Cardiac septum (tissue), 1 donor: ENCODE measurements at regions of chr2 and their contacts with region 1.

Region 1: DNA sequence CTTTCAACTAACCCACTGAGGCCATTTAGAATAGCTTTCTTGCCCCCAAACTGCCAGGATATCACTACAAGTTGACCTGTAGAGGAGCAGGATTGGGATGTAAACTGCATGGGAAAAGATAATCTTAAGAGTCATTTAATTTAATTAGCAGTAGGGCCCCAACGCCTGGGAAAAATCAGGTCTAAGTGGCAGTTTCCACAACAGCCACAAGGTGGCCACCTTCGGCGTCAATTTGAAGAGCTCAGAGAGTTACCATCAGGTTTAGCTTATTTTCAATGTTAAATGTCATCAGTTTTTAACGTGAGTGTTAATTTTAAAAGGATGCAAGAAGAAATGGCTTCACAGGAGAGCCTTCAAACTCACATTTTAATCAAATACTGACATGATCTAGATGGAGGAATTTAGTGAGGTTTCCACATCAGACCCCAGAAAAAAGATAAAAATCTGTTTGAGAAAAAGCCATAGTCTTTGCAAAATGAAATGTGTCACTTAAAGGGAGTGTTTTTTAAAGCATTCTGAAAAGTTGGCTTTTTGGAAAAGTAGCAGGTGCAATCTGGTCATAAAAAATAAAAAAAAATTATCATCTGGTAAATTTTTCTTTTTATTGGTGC is 77.3 kb upstream of the UPP2 start:
- DNase-seq: peak; percentile 80

Region 2: DNA sequence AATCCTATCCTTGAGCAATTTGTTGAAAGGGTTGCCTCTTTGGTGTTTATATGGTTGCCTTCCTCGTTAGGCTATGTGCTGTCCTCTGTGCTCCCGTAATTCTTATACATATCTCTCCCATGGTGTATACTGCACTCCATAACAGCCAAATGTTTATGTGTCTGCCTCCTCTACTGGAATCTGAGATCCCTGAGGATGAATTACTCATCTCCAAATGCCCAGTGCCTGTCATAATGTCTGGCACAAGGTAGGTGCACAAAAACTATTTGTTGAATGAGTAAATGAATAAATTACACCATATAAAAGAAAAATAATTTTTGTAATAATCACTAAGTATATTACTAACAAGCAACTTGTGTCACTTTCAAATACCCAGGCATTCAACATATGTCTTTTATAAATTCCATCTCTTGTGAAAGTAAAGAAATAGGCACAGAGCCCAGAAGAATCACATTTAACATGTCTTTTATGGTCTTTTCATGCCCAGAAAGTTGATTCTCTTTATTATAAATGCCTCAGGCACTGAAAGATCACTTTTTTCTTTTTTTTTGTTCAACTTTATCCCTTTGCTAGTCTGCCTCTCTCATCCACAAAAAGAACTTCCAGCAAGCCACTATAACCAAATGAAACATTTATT is 267.3 kb after region 1 on chr2:
- intact Hi-C with region 1: no loop called
- DNase-seq: no peak

Region 3: GRCh38 chr2:158667586-158667985 is 643.2 kb after region 1 on chr2:
- intact Hi-C with region 1: no loop called
- DNase-seq: no peak

Region 4: DNA sequence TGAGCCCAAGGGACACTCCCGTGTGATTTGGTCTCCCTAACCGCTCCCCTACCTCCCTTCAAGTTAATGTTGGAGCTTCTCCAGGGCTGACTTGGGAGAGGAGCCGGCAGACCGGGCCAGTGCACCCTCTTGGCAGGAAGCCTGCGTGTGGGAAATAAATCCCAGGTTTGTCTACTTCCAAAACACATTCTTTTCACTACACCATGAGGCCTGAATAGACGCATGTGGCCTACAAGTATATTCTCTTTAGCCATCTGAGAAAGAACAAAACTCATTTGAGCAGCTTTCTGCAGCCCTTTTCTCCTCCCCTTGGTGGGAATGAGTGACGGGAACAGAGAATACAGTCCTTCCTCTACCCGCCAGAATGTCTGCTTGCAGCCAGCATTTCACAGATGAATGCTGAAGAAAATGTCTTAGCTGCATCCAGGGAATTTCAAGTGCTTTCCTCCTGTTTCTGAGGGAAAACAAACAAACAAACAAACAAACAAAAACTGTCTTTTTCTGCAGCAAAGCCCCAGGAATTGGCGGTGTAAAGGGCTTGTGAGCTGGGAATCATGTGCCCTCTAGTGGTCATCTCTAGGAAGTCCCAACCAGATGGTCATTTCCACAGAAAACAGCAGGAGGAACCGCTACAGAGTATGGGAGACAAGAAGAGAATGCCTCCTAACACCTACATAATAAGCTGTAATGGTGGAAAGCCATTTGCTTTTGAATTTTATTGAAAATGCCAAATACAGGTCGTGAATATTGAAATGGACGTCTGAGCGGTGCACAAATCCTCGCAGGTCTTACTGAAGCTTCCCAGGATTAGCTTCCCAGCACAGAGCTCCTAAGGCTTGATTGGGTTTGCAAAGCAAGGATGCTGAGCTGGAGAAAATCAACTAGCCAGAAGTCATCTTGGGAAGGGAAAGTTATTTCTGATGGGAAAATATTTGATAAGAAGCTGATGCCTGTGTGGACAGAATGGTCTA is 729.5 kb after region 1 on chr2:
- intact Hi-C with region 1: loop called (anchors 2 kb)
- DNase-seq: no peak